ENCODE measurements at regions of chr2 and their contacts with region 1.

Region 1: DNA sequence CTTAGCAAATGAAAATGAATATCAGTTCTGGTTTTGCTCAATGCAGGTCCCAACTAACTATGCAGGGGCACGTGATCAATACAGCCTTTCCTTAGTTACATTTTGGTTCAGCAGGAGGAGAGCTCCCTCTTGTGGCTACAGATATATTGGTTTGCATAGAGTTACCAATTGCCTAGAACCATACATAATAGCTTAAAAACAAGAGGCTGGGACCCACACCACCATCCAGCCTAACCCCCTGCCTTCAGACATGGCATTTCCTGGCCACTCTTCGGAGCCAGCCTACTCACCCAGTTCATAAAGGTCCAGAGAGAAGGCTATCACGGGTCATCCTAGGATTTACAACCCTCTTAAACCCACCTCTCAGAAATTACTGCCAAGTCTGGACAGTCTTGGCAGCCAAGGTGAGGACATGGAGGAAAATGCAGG is 10.5 kb downstream of the CCDC93 start:
- DNase-seq: peak; percentile 47
- H3K4me3 ChIP-seq: no peak overlapping the region
- H3K27ac ChIP-seq: no peak overlapping the region
- H3K4me1 ChIP-seq: peaks cover 7 to 16% (median 10%) of the 10 kb centered on the region in 6 donors
- H3K27me3 ChIP-seq: no peaks in the 10 kb centered on the region
- CTCF ChIP-seq: peak; percentile 61 to 87 (median 78)
- POLR2A ChIP-seq: no peak

Region 2: DNA sequence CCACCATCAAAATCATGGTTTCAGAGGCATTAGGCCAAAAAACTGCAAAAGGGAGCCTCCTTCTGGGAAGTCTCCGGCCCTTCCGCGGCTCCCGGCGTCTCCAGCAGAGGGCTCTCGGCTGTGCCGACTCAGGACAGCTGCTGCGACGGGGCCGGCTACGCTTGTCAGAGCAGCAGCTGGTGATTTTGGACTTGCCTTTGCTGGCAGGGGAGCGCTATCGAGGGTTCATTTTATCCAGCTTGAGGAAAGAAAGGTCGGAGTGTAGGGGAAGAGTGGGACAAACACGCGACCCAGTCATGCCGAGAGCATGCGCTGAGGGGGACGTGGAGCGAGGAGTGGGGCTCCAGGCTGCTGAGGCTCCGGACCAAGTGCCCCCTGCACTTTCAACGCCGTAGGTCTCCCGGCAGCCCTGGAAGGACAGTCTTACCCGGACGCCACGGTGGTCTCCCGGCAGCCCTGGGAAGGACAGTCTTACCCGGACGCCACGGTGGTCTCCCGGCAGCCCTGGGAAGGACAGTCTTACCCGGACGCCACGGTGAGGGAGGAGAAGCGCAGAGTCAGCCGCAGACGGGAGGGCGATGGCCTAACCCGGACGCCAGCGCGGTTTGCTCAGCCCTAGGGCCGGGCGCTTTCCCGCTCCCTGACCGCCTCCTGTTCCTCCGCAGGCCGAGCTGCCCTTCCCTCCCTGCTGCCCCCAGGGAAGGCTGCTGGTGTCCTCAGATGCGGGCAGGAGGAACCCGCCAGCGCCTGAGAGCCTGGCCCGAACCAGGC is 167.2 kb before region 1 on chr2:
- intact Hi-C with region 1: loop called (anchors 10 kb)
- DNase-seq: peak; percentile 91
- H3K4me3 ChIP-seq: peak overlapping the region; percentile 13 to 66 (median 26)
- H3K27ac ChIP-seq: peak overlapping the region in 4 of 8 donors; percentile 18 to 65 (median 46)
- H3K4me1 ChIP-seq: peaks cover 0 to 16% (median 13%) of the 10 kb centered on the region in 6 donors
- H3K27me3 ChIP-seq: peaks cover 0 to 10% (median 0%) of the 10 kb centered on the region in 7 donors
- CTCF ChIP-seq: peak in 10 of 11 experiments; percentile 18 to 83 (median 62)
- POLR2A ChIP-seq: no peak